Activated CD4-positive, alpha-beta T cell treated with anti-CD3 and anti-CD28 coated beads for 36 hours (primary cell): ENCODE measurements at regions of chr10 and their contacts with region 1.

Region 1: GRCh38 chr10:99234041-99234790 is 1.4 kb downstream of the HPSE2 start:
- DNase-seq: peak; percentile 72
- ATAC-seq: peak; percentile 81
- H3K4me3 Mint-ChIP-seq: peak overlapping the region; percentile 58
- H3K27ac Mint-ChIP-seq: no peak overlapping the region
- H3K4me1 Mint-ChIP-seq: peaks cover 23% of the 10 kb centered on the region
- H3K27me3 Mint-ChIP-seq: peaks cover 71% of the 10 kb centered on the region

Region 2: DNA sequence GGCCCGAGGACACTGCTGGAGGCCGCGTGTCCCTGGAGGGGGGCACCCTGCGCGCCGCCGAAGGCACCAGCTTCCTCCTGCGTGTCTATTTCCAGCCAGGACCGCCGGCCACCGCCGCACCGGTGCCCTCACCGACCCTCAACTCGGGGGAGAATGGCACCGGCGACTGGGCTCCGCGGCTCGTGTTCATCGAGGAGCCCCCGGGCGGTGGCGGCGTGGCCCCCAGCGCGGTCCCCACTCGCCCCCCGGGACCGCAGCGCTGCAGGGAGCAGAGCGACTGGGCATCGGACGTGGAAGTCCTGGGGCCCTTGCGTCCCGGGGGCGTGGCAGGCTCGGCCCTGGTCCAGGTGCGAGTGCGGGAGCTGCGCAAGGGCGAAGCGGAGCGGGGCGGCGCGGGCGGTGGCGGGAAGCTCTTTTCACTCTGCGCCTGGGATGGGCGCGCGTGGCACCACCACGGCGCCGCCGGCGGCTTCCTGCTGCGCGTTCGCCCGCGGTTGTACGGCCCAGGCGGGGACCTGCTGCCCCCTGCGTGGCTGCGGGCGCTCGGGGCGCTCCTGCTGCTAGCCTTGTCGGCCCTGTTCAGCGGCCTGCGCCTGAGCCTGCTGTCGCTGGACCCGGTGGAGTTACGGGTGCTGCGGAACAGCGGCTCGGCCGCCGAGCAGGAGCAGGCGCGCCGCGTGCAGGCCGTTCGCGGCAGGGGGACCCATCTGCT is 95.5 kb after region 1 on chr10:
- CTCF ChIA-PET with region 1: no interaction called
- POLR2A ChIA-PET with region 1: no interaction called
- intact Hi-C with region 1: loop called in 1 of 2 experiments (anchors 5 kb)
- DNase-seq: peak; percentile 41
- ATAC-seq: peak; percentile 41
- H3K4me3 Mint-ChIP-seq: peak overlapping the region; percentile 66
- H3K27ac Mint-ChIP-seq: no peak overlapping the region
- H3K4me1 Mint-ChIP-seq: peaks cover 5% of the 10 kb centered on the region
- H3K27me3 Mint-ChIP-seq: peaks cover 33% of the 10 kb centered on the region

Region 3: DNA sequence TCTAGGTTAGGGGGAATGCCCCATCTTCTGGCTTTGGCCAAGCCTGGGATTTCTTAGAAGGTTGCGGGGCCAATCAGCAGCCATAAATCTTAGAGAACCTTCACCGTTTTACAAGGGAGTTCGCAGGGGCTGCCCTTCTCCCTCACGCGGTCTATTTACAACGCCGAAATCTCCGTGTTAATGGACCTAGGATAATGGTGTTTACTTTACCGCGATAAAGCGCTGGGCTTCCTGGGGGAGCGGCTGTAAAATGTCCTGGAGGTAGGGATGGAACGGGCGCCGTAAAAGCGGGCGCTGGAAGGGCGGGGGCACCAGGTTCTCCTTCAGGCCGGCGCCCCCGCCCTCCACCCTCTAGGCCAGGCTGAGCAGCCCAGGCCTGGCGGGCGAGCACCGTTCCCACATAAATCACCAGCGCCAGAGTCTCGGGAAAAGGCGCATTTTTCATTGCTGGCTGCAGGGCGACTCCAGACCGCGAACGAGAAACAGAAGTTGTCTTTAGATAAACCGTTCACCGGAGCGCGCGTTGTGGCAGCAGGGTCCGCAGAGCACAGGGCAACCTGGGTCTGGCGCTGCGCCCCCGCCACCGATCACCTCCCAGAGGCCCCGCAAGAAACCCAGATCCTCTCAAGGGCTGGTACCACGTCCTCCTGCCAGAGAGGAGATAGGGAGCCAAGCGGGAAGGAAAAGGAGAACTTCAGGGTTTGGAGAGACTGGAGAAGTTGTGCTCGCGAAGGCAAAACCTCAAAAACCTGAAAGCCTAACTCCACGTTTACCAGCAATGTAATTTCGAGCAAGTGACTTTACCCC is 286.0 kb after region 1 on chr10:
- CTCF ChIA-PET with region 1: no interaction called
- POLR2A ChIA-PET with region 1: no interaction called
- intact Hi-C with region 1: loop called (anchors 5 to 10 kb)
- DNase-seq: no peak
- ATAC-seq: no peak
- H3K4me3 Mint-ChIP-seq: no peak overlapping the region
- H3K27ac Mint-ChIP-seq: no peak overlapping the region
- H3K4me1 Mint-ChIP-seq: peaks cover 6% of the 10 kb centered on the region
- H3K27me3 Mint-ChIP-seq: peaks cover 64% of the 10 kb centered on the region

Region 4: DNA sequence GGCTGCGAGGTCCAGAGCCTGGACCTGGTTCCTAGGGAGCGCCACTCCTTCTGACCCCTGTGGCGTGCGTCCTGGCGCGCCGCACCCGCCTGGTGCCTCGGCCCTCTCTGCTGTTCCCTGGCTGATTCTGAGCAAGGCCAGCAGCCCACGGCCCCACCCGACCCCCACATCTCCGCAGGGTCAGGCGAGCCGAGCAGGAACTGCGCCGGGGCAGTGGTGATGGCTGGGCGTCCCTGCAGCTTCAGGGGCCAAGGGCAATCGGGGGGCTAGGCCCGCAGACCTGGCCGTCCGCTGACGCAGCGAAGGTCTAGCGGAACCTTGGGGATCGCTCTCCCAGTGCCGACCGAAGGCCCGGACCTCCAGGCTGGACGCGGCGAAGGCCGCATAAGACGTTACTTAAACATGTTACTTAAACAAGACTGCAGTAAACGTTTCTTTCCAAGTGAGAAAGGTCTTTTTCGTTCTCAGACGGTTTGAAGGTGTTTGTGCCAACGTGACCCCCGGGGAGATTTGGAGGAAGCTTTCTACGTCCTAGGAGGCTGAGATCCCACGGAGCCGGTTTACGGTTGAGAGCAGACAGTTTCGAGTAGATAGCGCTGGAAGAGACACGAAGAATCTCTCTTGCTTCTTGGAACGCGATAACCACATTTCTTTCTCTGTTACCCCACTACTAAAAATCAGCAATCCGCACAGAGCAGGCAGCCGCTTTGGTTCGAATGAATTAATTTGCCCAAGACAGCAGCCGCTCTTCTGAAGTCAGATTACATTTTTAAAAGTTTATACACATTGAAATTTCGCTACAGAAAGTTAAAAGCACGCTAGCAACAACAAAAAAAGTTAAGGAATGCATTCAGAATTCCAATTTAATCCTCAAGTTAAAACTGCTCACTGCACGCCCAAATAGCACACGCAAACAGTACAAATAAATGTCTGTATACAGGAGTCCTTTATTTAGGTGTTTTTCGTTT is 293.6 kb after region 1 on chr10:
- CTCF ChIA-PET with region 1: no interaction called
- POLR2A ChIA-PET with region 1: no interaction called
- intact Hi-C with region 1: loop called (anchors 5 to 10 kb)
- DNase-seq: no peak
- ATAC-seq: no peak
- H3K4me3 Mint-ChIP-seq: no peak overlapping the region
- H3K27ac Mint-ChIP-seq: no peak overlapping the region
- H3K4me1 Mint-ChIP-seq: peaks cover 29% of the 10 kb centered on the region
- H3K27me3 Mint-ChIP-seq: peaks cover 83% of the 10 kb centered on the region